ENCODE measurements at regions of chr1 and their contacts with region 1.

Region 1: DNA sequence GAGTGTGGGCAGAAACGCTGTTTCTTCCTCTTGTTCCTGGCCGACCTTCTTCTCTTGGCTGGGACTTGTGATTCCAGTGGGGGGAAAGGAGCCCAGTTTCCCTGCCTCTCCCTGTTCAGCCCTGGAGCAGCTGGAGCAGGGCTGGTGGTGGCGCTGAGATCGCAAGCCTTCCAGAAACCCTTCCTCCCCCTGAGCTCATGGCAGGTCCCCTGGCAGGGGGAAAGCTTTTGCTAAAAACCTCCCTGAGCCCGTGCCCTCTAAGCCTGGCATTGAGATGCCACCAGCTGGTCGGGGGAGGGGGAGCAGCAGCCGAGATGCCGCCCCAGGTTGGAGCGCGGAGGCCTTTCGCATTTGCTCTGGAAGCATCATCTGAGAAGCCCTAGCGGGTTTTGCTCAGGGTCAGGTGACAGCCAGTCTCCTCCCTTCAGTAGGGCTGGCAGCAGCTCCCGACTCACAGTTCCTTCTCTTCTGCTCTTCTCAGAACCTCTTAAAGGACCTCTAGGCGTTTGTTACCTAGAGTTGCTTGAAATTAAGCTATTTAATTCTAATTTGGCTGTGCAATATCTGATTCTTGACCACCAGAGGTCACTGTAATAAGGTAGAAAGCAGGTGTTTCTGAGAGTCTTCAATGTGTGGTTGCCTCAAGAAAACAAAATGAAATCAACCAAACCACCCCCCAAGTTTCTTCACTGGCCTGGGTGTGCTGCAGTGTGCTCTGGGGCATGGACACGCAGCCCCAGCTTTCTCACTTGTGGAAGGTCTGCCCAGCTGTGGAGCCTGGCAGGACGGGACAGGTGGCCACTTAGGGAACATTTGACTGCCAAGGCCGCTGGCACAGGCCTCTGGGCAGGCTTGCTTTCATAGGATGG is 257.3 kb downstream of the CAMTA1 start:
- DNase-seq: no peak
- ATAC-seq: no peak
- H3K4me3 ChIP-seq: no peak overlapping the region
- H3K27ac ChIP-seq: no peak overlapping the region
- H3K4me1 ChIP-seq: no peaks in the 10 kb centered on the region
- H3K27me3 ChIP-seq: peaks cover 0 to 7% (median 0%) of the 10 kb centered on the region in 9 donors
- CTCF ChIP-seq: peak in 11 of 12 donors; percentile 22 to 54 (median 45)
- POLR2A ChIP-seq: no peak

Region 2: GRCh38 chr1:6770751-6771440 is 271.7 kb before region 1 on chr1:
- intact Hi-C with region 1: no loop called
- DNase-seq: no peak
- ATAC-seq: peak in 1 of 4 donors; percentile 41
- H3K4me3 ChIP-seq: no peak overlapping the region
- H3K27ac ChIP-seq: no peak overlapping the region
- H3K4me1 ChIP-seq: peaks cover 0 to 7% (median 0%) of the 10 kb centered on the region in 12 donors
- H3K27me3 ChIP-seq: peaks cover 0 to 14% (median 0%) of the 10 kb centered on the region in 9 donors
- CTCF ChIP-seq: no peak
- POLR2A ChIP-seq: no peak

Region 3: DNA sequence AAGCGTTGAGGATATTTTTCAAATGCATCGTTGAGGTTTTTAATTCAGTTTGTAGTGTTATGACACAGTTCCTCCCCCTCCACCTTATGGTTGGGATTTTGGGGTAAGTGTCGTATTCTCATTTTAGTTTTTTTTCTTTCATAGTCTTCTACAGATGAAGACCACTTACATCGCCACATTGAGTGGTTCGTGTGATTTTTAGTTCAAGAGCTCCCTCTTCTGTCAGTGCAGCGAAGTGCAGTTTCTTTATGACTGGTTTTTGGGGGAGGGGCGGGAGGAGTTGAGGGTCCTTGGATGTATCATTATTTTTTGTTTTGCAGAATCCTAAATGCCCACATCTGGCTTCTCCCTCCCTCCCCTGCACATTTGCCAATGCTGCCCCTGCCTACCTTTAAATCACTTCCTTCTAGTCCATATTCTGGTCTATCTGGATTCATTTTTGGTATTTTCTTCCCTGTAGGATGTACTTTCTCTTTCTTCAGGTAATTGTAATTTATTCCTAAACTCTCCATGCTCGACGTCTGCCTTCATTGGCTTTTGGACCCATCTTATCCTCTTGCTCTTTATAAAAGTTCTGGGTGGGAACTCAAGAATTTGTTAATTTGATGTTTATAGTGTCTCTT is 175.8 kb after region 1 on chr1:
- intact Hi-C with region 1: loop called in 2 of 10 experiments (anchors 10 kb)
- DNase-seq: no peak
- ATAC-seq: no peak
- H3K4me3 ChIP-seq: no peak overlapping the region
- H3K27ac ChIP-seq: no peak overlapping the region
- H3K4me1 ChIP-seq: no peaks in the 10 kb centered on the region
- H3K27me3 ChIP-seq: peaks cover 0 to 9% (median 0%) of the 10 kb centered on the region in 9 donors
- CTCF ChIP-seq: peak; percentile 39 to 70 (median 60)
- POLR2A ChIP-seq: no peak